ENCODE measurements at regions of chr15 and their contacts with region 1.

Region 1: DNA sequence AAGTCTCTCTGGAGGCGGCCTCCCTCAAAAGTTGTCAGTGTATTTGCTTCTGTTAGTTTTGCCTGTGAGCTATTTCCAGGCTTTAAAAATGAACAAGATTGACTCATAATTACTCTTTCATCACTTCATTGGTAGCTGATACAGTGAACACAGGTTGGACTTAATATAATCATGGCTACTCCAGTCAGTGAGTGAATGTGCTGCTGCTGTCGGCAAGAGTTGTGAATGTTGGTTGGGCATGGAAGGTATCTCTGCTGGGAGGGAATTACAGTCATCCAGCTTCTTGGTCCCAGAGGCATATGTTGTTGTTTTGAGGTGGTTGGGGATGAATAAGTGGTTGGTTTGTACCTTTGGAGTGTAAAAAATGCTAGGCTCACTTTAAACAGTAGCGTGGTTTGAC is 11.5 kb downstream of the TCF12 start:
- DNase-seq: no peak
- H3K4me3 ChIP-seq: no peak overlapping the region
- H3K27ac ChIP-seq: no peak overlapping the region
- H3K4me1 ChIP-seq: peaks cover 8% of the 10 kb centered on the region
- CTCF ChIP-seq: no peak

Region 2: DNA sequence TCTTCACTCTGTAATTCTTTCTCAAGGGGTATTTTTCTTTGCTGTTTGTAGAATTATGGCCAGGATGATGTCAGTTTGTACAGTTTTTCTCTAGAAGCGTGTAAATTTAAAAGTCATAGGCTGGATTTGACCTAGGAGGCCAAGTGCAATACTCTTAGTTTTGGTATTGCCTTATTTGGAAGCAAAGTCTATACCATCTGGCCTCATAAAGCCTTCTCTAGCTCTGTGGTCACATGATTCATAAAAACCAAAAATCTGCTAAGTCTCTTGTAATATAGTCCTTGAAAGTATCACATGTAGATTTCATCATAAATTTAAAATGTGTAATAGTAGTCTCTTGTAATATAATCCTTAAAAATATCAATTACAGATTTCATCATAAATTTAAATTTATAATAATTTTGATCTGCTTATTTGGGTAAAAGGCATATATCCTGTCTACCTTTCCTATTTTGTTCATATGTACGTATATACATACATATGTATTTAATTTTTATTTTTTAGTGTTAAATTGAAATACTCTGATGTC is 539.1 kb before region 1 on chr15:
- CTCF ChIA-PET with region 1: no interaction called
- POLR2A ChIA-PET with region 1: no interaction called
- intact Hi-C with region 1: no loop called
- DNase-seq: no peak
- H3K4me3 ChIP-seq: no peak overlapping the region
- H3K27ac ChIP-seq: no peak overlapping the region
- H3K4me1 ChIP-seq: no peaks in the 10 kb centered on the region
- CTCF ChIP-seq: no peak

Region 3: DNA sequence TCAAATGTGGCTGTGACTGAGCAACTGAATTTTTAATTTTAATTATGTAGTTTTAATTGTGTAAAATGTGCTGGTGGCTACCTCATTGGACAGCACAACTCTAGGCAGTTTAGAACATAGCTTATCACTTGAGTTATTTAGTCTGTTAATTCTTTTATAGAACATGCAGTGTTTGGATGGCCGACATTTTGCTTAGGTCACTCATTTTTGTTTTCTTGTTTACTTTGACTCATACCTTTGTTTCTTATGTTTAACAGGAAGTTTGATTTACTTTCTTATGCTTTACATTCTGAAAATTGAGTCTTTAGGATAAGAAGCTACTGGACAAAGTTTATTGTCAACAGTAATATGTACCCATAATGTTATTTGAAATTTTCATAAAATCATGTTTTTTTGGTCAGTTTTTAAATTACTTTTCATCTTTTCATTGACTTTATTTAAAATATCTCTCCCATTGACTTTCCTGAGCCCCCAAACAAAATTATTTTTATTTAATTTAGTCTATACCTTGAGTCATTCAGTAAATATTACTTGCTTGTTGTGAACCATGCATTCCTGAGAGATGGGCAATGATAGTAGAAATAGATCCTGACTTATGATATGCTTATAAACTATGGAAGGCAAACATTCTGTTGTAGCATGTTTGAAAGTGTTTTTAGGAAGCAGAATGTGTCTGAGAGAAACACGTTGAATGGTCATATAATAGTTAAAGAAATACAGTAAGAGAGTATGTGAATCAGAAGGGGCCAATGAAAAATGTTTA is 49.1 kb after region 1 on chr15:
- CTCF ChIA-PET with region 1: no interaction called
- POLR2A ChIA-PET with region 1: no interaction called
- intact Hi-C with region 1: loop called (anchors 1 kb)
- DNase-seq: no peak
- H3K4me3 ChIP-seq: no peak overlapping the region
- H3K27ac ChIP-seq: no peak overlapping the region
- H3K4me1 ChIP-seq: no peaks in the 10 kb centered on the region
- CTCF ChIP-seq: no peak

Measured in OCI-LY7 (cell line).